Naive thymus-derived CD4-positive, alpha-beta T cell (primary cell): ENCODE measurements at regions of chr1 and their contacts with region 1.

Region 1: DNA sequence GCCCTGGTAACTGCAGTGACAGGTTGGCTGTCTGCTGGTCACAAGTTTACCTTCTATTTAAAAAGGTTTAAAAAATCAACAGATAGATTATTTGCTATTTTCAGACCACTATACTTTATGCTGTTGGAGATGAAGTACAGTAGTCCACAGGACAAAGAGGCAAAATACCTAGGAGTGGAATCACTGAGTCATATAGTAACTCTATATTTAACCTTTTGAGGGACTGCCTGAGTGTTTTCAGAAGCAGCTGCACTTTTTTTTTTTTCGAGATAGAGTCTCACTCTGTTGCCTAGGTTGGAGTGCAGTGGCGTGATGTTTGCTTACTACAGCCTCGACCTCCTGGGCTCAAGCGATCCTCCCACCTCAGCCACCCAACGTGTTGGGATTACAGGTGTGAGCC is 11.7 kb downstream of the CNIH4 start:
- DNase-seq: no peak
- ATAC-seq: no peak
- H3K4me3 ChIP-seq: no peak overlapping the region
- H3K4me3 Mint-ChIP-seq: no peak overlapping the region
- H3K27ac ChIP-seq: no peak overlapping the region
- H3K27ac Mint-ChIP-seq: peak overlapping the region in 1 of 9 donors; percentile 49
- H3K4me1 ChIP-seq: peaks cover 0 to 6% of the 10 kb centered on the region in 2 donors
- H3K4me1 Mint-ChIP-seq: peaks cover 24 to 61% (median 49%) of the 10 kb centered on the region in 7 donors
- H3K27me3 ChIP-seq: no peaks in the 10 kb centered on the region
- H3K27me3 Mint-ChIP-seq: no peaks in the 10 kb centered on the region

Region 2: DNA sequence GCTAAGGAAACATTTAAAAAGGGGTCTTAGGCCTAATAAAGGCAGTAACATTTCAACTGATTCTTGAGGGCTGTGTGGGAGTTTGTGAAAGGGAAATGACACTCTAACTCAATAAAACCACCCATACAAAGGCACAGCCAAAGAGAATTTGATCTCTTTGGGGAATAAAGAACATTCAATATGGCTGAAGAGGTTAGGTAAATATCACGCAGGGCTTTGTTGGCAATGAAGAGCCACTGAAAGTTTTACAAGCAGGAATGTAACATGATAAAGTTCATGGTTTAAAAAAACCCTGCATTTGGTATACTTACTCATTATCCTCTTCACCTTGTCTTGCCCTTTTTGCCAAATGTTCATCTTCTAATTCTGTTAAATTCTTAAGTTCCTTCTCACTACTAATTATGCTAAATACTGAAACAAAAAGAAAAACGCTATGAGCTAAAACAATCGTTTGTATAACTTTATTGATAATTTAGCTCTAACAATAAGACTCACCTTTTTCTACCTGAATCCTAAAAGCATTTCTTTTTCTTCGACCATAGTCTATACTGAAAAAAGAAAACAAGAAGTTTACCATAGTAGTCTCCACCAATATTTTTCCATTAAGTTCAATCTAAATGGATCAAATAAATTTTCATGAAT is 50.9 kb before region 1 on chr1:
- CTCF ChIA-PET with region 1: no interaction called
- POLR2A ChIA-PET with region 1: no interaction called
- intact Hi-C with region 1: no loop called
- DNase-seq: no peak
- ATAC-seq: no peak
- H3K4me3 ChIP-seq: no peak overlapping the region
- H3K4me3 Mint-ChIP-seq: no peak overlapping the region
- H3K27ac ChIP-seq: no peak overlapping the region
- H3K27ac Mint-ChIP-seq: peak overlapping the region in 1 of 9 donors; percentile 47
- H3K4me1 ChIP-seq: no peaks in the 10 kb centered on the region
- H3K4me1 Mint-ChIP-seq: peaks cover 2 to 26% (median 11%) of the 10 kb centered on the region in 7 donors
- H3K27me3 ChIP-seq: no peaks in the 10 kb centered on the region
- H3K27me3 Mint-ChIP-seq: no peaks in the 10 kb centered on the region

Region 3: DNA sequence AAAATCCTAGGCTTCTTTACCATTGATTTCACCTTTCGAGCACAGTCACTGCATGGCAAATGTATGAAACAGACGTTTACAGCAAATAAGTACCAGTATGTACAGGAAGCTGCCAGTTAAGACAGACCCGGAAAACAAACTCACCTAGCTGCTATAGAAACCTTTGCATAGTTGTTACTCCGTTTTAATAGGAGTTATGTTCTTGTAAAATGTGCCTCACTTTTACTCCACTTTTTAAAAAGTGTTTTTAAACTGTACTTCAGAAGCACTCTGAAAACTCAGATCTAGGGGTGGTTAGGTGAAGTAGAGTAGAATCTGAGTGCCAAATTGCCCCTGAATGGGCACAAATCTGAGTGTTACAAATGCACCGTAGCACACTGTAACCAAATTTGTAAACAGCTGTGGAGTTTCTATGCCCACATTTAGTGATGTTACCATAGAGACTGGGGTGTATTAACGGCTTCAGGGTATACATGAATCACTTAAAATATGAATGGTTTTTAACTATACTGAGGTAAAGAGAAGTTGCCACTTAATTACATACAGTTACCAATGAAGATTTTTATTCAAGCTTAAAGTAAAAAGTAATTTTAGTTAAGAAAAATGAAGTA is 19.0 kb after region 1 on chr1:
- CTCF ChIA-PET with region 1: no interaction called
- POLR2A ChIA-PET with region 1: interaction called, 6 read pairs
- intact Hi-C with region 1: loop called in 1 of 2 experiments (anchors 2 kb)
- DNase-seq: peak in 7 of 9 donors; percentile 37 to 74 (median 49)
- ATAC-seq: peak; percentile 84
- H3K4me3 ChIP-seq: no peak overlapping the region
- H3K4me3 Mint-ChIP-seq: peak overlapping the region in 8 of 10 donors; percentile 22 to 56 (median 46)
- H3K27ac ChIP-seq: peak overlapping the region; percentile 34
- H3K27ac Mint-ChIP-seq: peak overlapping the region; percentile 72 to 93 (median 86)
- H3K4me1 ChIP-seq: peaks cover 17 to 28% of the 10 kb centered on the region in 2 donors
- H3K4me1 Mint-ChIP-seq: peaks cover 23 to 64% (median 46%) of the 10 kb centered on the region in 7 donors
- H3K27me3 ChIP-seq: no peaks in the 10 kb centered on the region
- H3K27me3 Mint-ChIP-seq: no peaks in the 10 kb centered on the region

Region 4: GRCh38 chr1:224407571-224408560 is 39.5 kb after region 1 on chr1:
- CTCF ChIA-PET with region 1: no interaction called
- POLR2A ChIA-PET with region 1: no interaction called
- intact Hi-C with region 1: no loop called
- DNase-seq: no peak
- ATAC-seq: no peak
- H3K4me3 ChIP-seq: no peak overlapping the region
- H3K4me3 Mint-ChIP-seq: no peak overlapping the region
- H3K27ac ChIP-seq: no peak overlapping the region
- H3K27ac Mint-ChIP-seq: peak overlapping the region in 3 of 9 donors; percentile 1 to 46 (median 42)
- H3K4me1 ChIP-seq: no peaks in the 10 kb centered on the region
- H3K4me1 Mint-ChIP-seq: peaks cover 10 to 43% (median 29%) of the 10 kb centered on the region in 7 donors
- H3K27me3 ChIP-seq: no peaks in the 10 kb centered on the region
- H3K27me3 Mint-ChIP-seq: no peaks in the 10 kb centered on the region

Region 5: DNA sequence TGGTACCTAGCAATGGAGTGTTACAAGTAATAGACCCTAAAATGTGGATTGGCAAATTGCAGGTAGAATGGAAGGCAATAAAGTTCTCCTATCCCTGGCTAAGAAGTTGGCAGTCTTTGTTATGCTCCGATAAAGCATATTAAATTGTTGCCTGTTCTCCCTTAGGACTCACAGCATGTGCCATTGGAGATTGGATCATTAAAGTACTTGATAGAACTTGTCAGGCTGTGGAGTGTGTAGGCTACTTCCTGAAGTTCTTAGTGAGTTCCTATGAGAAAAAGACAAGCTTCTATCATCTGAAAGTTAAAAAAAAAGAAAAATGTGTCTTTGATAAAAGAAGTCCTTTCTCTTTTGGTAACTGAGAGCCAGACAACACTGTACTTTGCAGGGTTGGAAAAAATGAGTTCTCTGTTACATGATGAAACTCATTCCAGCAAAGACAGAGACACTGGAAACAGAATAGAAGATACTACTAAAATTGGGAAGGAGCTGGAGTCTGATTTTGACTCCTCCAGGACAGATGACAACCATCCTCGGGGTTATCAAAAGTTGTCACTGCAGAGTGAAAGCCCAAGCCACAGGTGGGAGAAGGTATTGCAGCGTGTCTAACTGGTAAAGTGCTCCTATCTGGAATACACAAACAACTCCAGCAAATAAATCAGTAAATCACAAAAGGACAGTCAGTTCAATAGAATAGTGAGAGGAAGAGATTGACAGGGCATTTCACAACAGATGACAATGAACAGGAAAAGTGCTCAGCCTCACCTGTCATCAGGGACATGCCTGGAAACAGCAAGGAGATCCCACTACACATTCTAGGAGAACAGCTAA is 153.7 kb after region 1 on chr1:
- CTCF ChIA-PET with region 1: no interaction called
- POLR2A ChIA-PET with region 1: no interaction called
- intact Hi-C with region 1: no loop called
- DNase-seq: no peak
- ATAC-seq: no peak
- H3K4me3 ChIP-seq: no peak overlapping the region
- H3K4me3 Mint-ChIP-seq: no peak overlapping the region
- H3K27ac ChIP-seq: no peak overlapping the region
- H3K27ac Mint-ChIP-seq: no peak overlapping the region
- H3K4me1 ChIP-seq: no peaks in the 10 kb centered on the region
- H3K4me1 Mint-ChIP-seq: peaks cover 0 to 4% (median 0%) of the 10 kb centered on the region in 7 donors
- H3K27me3 ChIP-seq: no peaks in the 10 kb centered on the region
- H3K27me3 Mint-ChIP-seq: peaks cover 0 to 22% (median 0%) of the 10 kb centered on the region in 5 donors